Endothelial cell of umbilical vein (primary cell): ENCODE measurements at regions of chr10 and their contacts with region 1.

Region 1: GRCh38 chr10:100986952-100987750 is at the starts of genes MRPL43 and TWNK:
- DNase-seq: peak; percentile 84
- H3K4me3 ChIP-seq: peak within 1 kb of the TSS; percentile 73 to 98 (median 81)
- H3K27ac ChIP-seq: no peak within 1 kb of the TSS
- H3K4me1 ChIP-seq: peaks cover 12% of the 10 kb centered on the region
- H3K27me3 ChIP-seq: no peaks in the 10 kb centered on the region
- CTCF ChIP-seq: no peak
- POLR2A ChIP-seq: no peak
- total RNA-seq, gene MRPL43: 75.0 and 77.3 TPM in 2 replicates
- total RNA-seq, gene TWNK: 10.9 and 12.3 TPM in 2 replicates

Region 2: GRCh38 chr10:100969187-100970075 is 17.7 kb before region 1 on chr10 and contains the start of gene SEMA4G:
- CTCF ChIA-PET with region 1: interaction called, 4 read pairs
- POLR2A ChIA-PET with region 1: interaction called, 3 read pairs
- dilution Hi-C with region 1: no loop called
- intact Hi-C with region 1: loop called (anchors 1 kb)
- DNase-seq: peak; percentile 43
- H3K4me3 ChIP-seq: peak within 1 kb of the TSS; percentile 57 to 75 (median 62)
- H3K27ac ChIP-seq: no peak within 1 kb of the TSS
- H3K4me1 ChIP-seq: peaks cover 12% of the 10 kb centered on the region
- H3K27me3 ChIP-seq: no peaks in the 10 kb centered on the region
- CTCF ChIP-seq: peak; percentile 76 to 88
- POLR2A ChIP-seq: no peak
- total RNA-seq, gene SEMA4G: 6.0 and 6.7 TPM in 2 replicates

Region 3: DNA sequence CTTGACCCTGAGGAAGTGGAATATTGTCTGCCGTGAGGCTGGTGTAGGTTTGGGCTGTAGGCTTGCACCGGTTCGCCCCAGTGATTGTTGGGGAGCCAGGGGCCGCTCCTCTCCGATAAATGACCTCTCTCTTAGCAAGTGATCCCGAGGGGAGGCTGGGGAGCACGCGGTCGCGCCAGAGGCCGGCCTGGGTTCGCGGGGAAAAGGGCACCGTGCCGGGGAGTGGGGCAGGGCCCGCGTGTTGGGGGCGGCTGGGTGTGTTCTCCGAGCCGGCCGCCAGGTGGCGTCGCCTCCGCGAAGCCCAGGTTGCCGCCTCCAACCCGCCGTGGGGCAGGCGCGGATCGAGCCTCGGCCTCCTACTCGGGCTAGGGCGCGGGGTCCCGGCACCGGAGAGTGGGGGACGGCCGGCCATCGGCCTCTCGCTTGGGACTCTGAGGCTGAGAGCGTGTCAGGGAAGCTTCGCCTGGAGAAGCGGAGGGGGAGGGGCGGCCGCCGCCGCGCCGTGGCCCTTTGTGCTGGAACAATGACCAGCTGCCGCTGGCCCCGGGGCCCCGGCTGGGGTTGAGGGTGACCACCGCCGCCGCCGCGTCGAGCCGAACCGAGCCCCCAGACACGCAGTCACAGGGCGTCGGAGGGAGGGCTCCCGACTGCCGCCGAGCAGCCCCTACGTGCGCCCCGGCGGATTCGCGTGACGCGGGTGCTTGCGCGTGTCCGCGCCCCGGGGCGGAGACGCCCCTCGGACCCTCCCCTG is 12.0 kb after region 1 on chr10:
- CTCF ChIA-PET with region 1: interaction called, 15 read pairs
- POLR2A ChIA-PET with region 1: no interaction called
- dilution Hi-C with region 1: no loop called
- intact Hi-C with region 1: no loop called
- DNase-seq: peak; percentile 75
- H3K4me3 ChIP-seq: peak overlapping the region; percentile 6 to 85 (median 29)
- H3K27ac ChIP-seq: peak overlapping the region; percentile 86
- H3K4me1 ChIP-seq: peaks cover 33% of the 10 kb centered on the region
- H3K27me3 ChIP-seq: no peaks in the 10 kb centered on the region
- CTCF ChIP-seq: peak; percentile 92 to 95
- POLR2A ChIP-seq: peak; percentile 76